ENCODE measurements at regions of chr1 and their contacts with region 1.

Region 1: GRCh38 chr1:23559136-23559984 is at the start of gene ID3:
- DNase-seq: peak; percentile 95
- H3K4me3 Mint-ChIP-seq: peak within 1 kb of the TSS; percentile 90
- H3K27ac Mint-ChIP-seq: peak within 1 kb of the TSS; percentile 66
- H3K4me1 Mint-ChIP-seq: peaks cover 67% of the 10 kb centered on the region
- H3K27me3 Mint-ChIP-seq: peaks cover 36% of the 10 kb centered on the region
- total RNA-seq, gene ID3: 20.8 and 22.9 TPM in 2 replicates

Region 2: DNA sequence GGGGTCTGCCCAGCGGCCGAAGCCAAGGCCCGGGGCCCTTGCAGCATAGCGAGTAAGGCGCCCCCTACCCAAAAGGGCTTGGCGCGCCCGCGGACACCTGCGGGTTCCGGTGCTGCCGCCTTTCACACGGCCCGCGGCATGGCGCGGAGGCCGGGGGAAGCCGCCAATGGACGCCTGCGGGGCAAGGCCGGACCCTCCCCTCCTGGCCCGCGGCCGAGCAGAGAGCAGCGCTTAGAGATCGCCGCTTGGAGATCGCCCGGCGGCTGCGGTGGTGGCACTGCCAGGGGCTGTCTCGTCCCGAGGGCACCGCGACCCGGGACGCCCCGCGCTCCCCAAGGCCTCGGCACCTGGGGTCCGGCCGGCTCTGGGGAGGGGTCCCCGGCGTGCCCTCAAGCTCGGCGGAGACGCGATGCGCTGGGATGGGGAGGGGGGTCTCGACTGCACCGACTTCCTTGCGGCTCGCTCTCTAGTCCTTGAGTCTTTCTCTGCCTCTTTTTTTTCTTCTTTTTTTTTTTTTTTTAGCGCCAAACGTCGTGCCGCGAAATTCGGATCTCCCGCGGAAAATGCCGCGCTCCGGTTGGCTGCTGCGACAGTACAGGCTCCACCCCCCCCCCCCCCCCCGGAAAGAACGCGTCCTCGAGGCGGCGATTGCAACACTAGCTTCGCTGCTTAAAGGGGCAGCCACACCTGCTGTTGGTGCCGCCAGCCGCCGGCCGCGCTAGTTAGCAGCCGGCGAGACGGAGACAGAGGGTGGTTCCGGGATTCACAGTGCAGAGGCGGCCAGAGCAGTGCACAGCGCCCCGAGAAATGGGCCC is 28.4 kb before region 1 on chr1 and contains the start of gene E2F2:
- intact Hi-C with region 1: loop called (anchors 2 kb)
- DNase-seq: peak; percentile 76
- H3K4me3 Mint-ChIP-seq: peak within 1 kb of the TSS; percentile 96
- H3K27ac Mint-ChIP-seq: peak within 1 kb of the TSS; percentile 97
- H3K4me1 Mint-ChIP-seq: peaks cover 84% of the 10 kb centered on the region
- H3K27me3 Mint-ChIP-seq: no peaks in the 10 kb centered on the region
- total RNA-seq, gene E2F2: 32.0 and 33.5 TPM in 2 replicates

Region 3: DNA sequence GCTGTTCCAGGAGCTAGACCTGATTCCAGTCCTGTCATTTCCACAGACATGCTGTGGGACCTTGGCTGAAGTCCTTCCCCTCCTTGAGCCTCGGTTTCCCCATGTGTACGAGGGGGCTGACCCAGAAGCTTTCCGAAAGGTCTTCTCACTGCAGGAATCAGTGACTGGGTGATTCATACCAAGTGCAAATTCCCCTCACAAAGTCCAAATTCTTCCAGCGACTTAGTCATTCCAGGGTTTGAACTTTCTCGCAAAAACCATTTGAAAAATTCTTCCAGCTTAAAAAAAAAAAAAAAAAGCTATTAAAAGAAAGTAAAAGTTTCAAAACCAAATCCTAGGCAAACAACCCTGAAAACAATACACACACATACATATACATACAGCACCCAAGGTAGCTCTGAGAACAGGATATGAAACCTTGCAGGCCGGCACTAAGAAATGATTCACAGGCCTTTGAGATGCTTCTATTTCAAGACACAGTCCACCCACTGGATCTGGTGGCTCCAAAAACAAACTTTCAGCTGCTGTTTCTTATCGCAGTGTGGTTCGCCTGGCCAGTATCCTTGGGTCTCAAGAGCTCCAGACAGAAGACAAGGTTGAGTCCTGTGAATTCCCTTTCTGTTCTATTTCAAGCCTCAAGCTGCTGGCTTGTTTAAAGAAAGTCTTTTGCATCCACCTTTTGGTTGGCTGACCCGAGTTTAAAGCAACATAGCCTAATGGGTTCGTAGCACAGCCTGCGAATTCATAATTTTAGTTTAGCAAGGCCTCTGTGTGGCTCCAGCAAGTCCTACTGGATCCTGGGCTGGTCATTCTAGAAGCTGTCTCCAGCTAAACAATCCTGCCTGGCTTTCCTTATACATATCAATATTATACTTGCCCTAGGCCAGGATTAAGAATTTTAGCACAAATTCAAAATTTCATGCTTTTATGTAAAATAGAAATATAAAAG is 18.0 kb after region 1 on chr1:
- intact Hi-C with region 1: loop called (anchors 1 kb)
- DNase-seq: no peak
- H3K4me3 Mint-ChIP-seq: peak overlapping the region; percentile 45
- H3K27ac Mint-ChIP-seq: peak overlapping the region; percentile 61
- H3K4me1 Mint-ChIP-seq: peaks cover 30% of the 10 kb centered on the region
- H3K27me3 Mint-ChIP-seq: peaks cover 2% of the 10 kb centered on the region

Region 4: GRCh38 chr1:23619299-23620188 is 60.2 kb after region 1 on chr1:
- intact Hi-C with region 1: loop called (anchors 1 kb)
- DNase-seq: peak; percentile 55
- H3K4me3 Mint-ChIP-seq: peak overlapping the region; percentile 67
- H3K27ac Mint-ChIP-seq: peak overlapping the region; percentile 69
- H3K4me1 Mint-ChIP-seq: peaks cover 72% of the 10 kb centered on the region
- H3K27me3 Mint-ChIP-seq: no peaks in the 10 kb centered on the region

Region 5: DNA sequence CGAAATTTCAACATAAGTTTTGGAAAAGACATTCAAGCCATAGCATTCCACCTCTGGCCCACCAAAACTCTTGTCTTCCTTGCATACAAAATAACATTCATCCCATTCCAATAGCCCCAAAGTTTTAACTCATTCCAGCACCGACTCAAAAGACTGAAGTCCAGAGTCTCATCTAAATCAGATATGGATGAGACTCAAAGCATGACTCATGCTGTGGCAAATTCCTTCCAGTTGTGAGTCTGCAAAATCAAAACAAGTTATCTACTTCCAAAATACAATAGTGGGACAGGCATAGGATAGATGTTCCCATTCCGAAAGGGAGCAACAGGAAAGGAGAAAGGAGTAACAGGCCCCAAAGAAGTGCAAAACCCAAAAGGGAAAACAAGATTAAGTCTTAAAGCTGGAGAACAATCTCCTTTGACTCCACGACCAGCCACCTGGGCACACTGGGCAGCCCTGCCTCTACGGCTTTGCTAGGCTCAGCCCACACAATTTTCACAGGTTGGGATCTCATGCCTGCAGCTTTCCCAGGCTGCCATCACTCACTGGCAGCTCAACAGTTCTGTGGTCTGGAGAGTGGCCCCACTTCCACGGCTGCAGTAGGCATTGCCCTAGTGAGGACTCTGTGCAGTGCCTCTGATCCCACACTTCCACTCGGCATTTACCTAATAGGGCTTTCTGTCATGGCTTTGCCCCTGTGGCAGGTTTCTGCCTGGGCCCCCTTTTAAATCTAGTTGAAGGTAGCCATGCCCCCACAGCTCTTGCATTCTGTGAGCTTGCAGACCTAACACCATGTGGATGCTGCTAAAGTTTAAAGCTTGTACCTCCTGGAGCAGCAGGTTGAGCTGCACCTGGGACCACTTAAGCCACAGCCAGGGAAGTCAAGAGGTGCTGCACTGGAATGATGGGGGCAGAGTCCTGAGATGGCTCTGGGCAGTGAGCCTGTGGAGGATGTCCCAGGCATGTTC is 1319.7 kb after region 1 on chr1:
- intact Hi-C with region 1: no loop called
- DNase-seq: no peak
- H3K4me3 Mint-ChIP-seq: no peak overlapping the region
- H3K27ac Mint-ChIP-seq: no peak overlapping the region
- H3K4me1 Mint-ChIP-seq: no peaks in the 10 kb centered on the region
- H3K27me3 Mint-ChIP-seq: peaks cover 46% of the 10 kb centered on the region